PC-9 (cell line): ENCODE measurements at regions of chr1 and their contacts with region 1.

Region 1: DNA sequence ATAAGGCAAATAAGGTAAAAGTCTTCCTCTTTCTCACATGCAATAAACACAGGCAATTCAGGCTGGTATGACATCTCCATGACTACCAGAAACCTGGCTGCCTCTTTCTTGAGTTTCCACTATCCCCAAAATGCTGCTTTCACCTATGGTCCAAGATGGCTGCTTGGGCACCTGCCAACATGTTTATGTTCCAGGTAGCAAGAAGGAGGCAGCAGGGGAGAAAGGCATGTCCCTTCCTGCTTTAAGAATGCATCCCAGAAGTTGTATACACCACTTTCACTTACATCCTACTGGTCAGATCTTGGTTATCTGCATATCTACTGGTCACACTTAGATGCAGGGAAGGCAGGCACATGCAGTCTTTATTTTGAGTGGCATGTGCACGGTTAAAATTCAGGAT is 19.4 kb upstream of the ACOT11 start:
- DNase-seq: no peak
- H3K4me3 ChIP-seq: no peak overlapping the region
- H3K27ac ChIP-seq: no peak overlapping the region
- H3K4me1 ChIP-seq: no peaks in the 10 kb centered on the region
- H3K27me3 ChIP-seq: no peaks in the 10 kb centered on the region
- CTCF ChIP-seq: no peak

Region 2: DNA sequence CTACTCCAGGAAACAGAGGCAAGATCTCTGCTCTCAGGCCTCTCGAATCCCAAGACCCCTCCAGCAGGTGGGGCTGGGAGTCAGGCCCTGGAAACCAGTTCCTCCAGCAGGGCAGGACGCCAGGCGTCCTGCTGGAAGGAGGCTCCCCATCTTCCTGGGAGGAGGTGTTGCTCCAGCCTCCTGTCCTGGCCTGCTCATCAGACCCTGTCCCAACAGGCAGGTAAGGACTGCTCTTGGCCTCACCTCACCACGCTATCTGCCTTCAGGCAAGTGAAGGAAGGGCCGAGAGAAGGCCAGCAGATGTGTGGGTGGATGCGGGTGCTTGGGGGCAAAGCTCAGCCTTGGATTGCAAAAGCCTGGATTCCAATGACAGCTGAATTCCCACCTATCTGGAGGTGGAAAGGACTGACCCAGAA is 205.3 kb before region 1 on chr1:
- CTCF ChIA-PET with region 1: interaction called, 13 read pairs
- POLR2A ChIA-PET with region 1: no interaction called
- intact Hi-C with region 1: no loop called
- DNase-seq: peak in 1 of 2 experiments; percentile 18
- H3K4me3 ChIP-seq: no peak overlapping the region
- H3K27ac ChIP-seq: no peak overlapping the region
- H3K4me1 ChIP-seq: no peaks in the 10 kb centered on the region
- H3K27me3 ChIP-seq: no peaks in the 10 kb centered on the region
- CTCF ChIP-seq: no peak

Region 3: DNA sequence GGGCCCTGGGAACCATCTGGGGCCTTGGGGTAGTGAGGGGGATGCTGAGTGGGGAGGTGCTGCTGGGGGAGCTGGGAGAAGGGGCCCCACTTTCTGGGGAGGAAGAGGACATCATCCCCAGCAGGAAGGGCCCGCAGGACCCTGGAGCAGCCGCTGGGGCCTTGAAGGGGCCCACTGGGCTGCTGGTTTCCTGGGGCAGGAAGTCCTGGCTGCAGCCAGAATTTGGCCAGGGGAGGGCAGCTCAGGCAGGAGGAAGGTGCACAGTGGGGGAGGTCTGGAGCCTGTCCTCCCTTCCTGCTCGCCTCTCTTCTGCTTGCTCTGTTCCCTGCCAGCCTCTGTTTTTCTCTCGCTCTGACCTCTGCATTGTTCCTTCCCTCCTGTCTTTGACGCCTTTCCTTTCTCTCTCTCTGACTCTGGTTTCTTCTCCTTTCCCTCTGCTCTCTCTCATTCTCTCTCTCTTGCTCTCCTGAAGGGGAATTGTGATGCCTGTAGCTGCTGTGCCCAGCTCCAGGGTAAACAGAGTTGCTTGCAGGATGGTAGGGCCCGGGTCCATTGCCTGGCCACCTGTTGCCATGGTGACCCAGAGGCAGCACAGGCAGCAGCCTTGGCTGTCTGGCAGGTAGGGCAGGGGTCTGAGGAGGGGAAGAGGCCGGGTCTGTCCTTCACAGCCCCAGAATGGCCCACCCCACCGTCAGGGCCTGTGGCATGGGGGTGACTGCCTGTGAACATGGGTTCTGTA is 43.4 kb after region 1 on chr1:
- CTCF ChIA-PET with region 1: no interaction called
- POLR2A ChIA-PET with region 1: no interaction called
- intact Hi-C with region 1: no loop called
- DNase-seq: no peak
- H3K4me3 ChIP-seq: no peak overlapping the region
- H3K27ac ChIP-seq: no peak overlapping the region
- H3K4me1 ChIP-seq: peaks cover 2% of the 10 kb centered on the region
- H3K27me3 ChIP-seq: no peaks in the 10 kb centered on the region
- CTCF ChIP-seq: no peak